Left ventricle myocardium inferior (tissue), 1 donor: ENCODE measurements at regions of chr14 and their contacts with region 1.

Region 1: DNA sequence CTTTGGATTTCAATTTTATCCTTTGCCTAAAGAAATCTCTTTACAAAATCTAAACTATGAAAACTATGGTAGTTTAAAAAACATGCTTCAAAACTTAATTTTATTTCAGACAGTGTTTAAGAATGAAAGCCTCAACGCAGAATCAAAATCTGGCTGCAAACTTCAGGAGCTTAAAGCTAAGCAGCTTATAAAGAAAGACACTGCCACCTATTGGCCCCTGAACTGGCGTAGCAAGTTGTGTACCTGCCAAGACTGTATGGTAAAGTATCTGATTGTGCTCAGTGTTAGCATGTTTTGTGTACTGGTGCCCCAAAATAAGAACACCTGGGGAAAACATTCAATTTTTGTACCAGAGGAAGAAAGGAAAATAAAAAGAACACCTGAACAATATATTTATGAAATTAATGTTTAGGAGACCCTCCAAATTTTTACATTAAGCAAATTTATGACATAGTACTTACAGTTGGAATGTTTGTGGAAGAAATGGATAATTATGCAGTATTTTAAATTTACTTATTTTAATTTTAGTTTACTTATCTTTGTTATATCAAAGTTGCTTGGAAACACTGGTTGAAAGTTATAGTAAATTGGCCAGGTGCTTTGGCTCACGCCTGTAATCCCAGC is 12.2 kb downstream of the UBR7 start:
- DNase-seq: no peak
- H3K4me3 ChIP-seq: no peak overlapping the region
- H3K27ac ChIP-seq: no peak overlapping the region
- H3K4me1 ChIP-seq: no peaks in the 10 kb centered on the region
- H3K27me3 ChIP-seq: no peaks in the 10 kb centered on the region
- CTCF ChIP-seq: peak; percentile 61

Region 2: GRCh38 chr14:93023039-93023438 is 196.2 kb before region 1 on chr14:
- intact Hi-C with region 1: no loop called
- DNase-seq: no peak
- H3K4me3 ChIP-seq: no peak overlapping the region
- H3K27ac ChIP-seq: no peak overlapping the region
- H3K4me1 ChIP-seq: peaks cover 48% of the 10 kb centered on the region
- H3K27me3 ChIP-seq: no peaks in the 10 kb centered on the region
- CTCF ChIP-seq: no peak

Region 3: DNA sequence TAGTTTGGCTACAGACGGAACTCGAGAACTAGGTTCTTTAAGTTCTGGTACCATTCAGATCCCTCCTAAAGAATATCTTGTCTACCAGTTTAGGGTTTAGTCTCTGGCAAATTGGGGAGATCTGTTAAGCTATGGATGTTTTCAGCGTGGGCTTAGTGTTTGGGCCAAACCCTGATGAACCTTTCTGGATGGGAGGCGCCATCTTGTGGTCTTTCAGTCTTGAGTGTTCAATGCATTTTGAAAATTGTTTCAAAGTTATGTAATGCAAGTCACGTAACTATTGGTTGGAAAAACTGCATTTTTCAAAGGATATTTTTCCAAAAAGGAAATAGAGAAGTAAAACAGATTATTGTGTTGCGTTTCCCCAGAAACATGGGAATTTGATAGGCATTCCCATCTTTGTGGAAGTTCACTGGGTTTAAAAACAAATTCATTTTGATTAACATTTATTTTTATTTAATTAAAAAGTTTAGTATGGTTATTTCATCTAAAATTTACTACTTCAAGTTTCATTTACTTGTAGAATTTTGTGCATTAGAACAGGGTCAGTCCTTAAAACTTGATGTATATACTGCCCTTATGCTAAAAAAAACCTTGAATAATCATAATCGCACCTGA is 400.1 kb after region 1 on chr14:
- intact Hi-C with region 1: loop called (anchors 10 kb)
- DNase-seq: no peak
- H3K4me3 ChIP-seq: no peak overlapping the region
- H3K27ac ChIP-seq: no peak overlapping the region
- H3K4me1 ChIP-seq: peaks cover 3% of the 10 kb centered on the region
- H3K27me3 ChIP-seq: peaks cover 18% of the 10 kb centered on the region
- CTCF ChIP-seq: peak; percentile 68